AG04450 (cell line): ENCODE measurements at regions of chr3 and their contacts with region 1.

Region 1: GRCh38 chr3:112043603-112044201 is 9.2 kb downstream of the TMPRSS7 start:
- DNase-seq: peak; percentile 44
- H3K4me3 ChIP-seq: no peak overlapping the region
- H3K27ac ChIP-seq: no peak overlapping the region
- H3K27me3 ChIP-seq: no peaks in the 10 kb centered on the region
- CTCF ChIP-seq: peak; percentile 93

Region 2: DNA sequence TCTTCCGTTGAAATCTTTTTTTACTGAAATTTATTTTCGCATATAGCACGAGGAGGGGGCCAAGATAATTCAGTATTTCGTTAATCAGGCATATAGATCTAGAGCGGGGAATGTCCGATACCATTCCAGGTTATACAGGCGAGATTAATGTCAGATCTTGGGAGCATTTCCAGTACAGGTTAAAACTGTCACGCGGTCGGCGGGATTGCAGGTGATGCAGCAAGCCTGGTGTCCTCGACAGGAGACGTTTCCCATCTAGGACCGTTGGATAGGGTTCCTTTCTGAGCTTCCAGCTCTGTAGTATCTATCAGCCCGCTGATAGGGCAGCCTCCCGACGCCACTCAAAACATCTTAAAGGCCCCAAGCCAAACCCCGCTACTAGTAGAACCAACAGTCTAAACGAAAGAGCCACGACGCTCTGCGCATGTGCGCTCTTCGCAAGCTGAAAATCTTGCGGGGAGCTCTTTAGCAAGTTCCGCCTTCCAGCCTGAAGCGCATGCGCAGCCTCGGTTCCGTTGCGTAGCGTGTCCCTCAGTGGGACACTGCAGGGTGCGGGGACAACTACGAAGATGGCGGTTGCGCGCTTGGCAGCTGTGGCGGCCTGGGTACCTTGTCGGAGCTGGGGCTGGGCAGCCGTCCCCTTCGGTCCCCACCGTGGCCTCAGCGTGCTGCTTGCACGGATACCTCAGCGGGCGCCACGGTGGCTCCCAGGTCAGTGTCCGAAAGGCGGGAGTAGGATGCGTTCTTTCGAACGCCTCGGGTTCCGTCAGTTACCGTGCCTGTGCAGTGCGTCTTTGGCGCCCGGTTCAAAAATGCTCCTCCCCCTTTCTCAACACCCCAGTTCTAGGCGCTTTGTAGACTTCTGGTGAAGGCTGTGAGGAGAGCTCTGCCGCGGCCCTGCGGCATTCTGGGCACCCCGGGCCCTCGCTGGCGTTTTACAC is 64.9 kb before region 1 on chr3 and contains the start of gene ABHD10:
- CTCF ChIA-PET with region 1: interaction called, 11 read pairs
- POLR2A ChIA-PET with region 1: no interaction called
- DNase-seq: peak; percentile 97
- H3K4me3 ChIP-seq: peak within 1 kb of the TSS; percentile 92
- H3K27ac ChIP-seq: peak within 1 kb of the TSS; percentile 47
- H3K27me3 ChIP-seq: no peaks in the 10 kb centered on the region
- CTCF ChIP-seq: no peak
- polyA plus RNA-seq, gene ABHD10: 28.8 and 37.5 TPM in 2 replicates

Region 3: DNA sequence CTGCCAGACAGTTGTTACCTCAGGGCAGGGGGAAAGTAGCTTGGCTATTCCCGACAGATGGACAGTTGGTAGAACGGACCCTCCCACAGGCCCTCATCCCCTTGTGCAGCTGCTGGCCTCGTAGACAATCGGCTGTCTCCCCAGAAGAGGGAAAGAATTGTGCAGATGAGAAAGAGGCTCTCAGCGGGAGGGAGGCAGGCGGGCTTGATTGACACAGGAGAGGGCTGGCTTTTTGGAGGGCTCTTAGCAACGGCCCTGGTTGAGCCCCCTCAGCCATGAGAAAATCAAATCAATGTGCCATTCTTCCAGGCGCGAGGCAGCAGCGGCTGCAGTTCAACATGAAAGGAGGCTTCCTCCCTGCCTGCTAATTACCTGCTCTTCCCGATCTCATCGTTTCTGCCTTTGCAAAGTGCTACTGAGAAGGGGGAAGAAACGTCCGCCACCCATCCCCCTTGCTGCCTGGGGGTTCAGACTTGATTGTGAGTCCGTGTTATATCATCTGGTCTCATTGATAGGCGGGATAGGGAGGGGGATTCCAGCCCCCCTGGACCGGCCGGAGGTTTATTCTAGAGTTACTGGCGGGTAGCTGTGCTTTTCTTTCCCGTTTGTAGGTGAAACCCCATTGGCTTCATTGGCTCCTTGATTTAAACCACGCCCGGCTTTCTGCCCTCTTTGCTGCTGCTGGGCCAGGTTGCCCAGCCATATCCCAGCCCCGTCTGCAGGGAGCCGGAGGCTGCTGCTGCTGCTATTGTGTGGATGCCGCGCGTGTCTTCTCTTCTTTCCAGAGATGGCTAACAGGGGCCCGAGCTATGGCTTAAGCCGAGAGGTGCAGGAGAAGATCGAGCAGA is 44.8 kb before region 1 on chr3 and contains the start of gene TAGLN3:
- CTCF ChIA-PET with region 1: interaction called, 80 read pairs
- POLR2A ChIA-PET with region 1: no interaction called
- DNase-seq: no peak
- H3K4me3 ChIP-seq: peak within 1 kb of the TSS; percentile 55
- H3K27ac ChIP-seq: peak within 1 kb of the TSS; percentile 49
- H3K27me3 ChIP-seq: no peaks in the 10 kb centered on the region
- CTCF ChIP-seq: no peak
- polyA plus RNA-seq, gene TAGLN3: 2.2 and 2.5 TPM in 2 replicates

Region 4: DNA sequence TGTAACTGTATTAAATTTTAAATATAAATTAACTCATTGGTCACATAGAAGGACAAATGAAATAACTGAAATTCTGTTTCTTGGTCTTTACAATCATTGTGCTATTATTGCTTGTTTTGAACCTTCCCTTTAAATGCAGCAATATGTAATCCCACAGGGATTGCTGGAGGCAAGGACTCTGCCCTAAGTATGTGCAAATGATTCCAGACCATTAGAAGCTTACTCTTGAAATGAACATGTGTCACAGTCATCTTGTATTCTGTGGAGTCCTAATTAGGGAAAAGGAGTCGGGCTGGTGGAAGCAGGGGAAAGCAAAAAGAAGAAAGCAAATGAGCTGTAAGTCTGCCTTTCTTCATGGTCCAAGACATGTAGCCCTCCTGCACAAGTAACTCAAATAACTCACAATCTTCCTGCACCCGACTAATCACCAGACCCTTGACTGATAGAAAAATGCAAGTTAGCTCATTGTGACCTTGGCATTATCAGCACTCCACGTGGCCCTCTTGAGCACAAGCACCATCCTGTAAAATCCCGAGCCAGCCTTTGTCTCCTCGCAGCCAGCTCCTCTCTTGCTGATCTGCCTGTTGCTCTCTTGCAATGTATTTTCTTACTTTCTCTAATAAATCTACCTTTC is 11.5 kb before region 1 on chr3:
- CTCF ChIA-PET with region 1: interaction called, 48 read pairs
- POLR2A ChIA-PET with region 1: no interaction called
- DNase-seq: no peak
- H3K4me3 ChIP-seq: no peak overlapping the region
- H3K27ac ChIP-seq: no peak overlapping the region
- H3K27me3 ChIP-seq: no peaks in the 10 kb centered on the region
- CTCF ChIP-seq: no peak

Region 5: GRCh38 chr3:112642912-112643506 is 599.3 kb after region 1 on chr3:
- CTCF ChIA-PET with region 1: no interaction called
- POLR2A ChIA-PET with region 1: no interaction called
- DNase-seq: peak; percentile 86
- H3K4me3 ChIP-seq: peak overlapping the region; percentile 28
- H3K27ac ChIP-seq: no peak overlapping the region
- H3K27me3 ChIP-seq: no peaks in the 10 kb centered on the region
- CTCF ChIP-seq: peak; percentile 96